PC-9 (cell line): ENCODE measurements at regions of chr20 and their contacts with region 1.

Region 1: GRCh38 chr20:34607066-34607465 is 48.5 kb downstream of the MAP1LC3A start:
- DNase-seq: no peak
- H3K4me3 ChIP-seq: no peak overlapping the region
- H3K27ac ChIP-seq: no peak overlapping the region
- H3K4me1 ChIP-seq: no peaks in the 10 kb centered on the region
- H3K27me3 ChIP-seq: no peaks in the 10 kb centered on the region
- CTCF ChIP-seq: no peak

Region 2: GRCh38 chr20:34586488-34587163 is 20.4 kb before region 1 on chr20:
- CTCF ChIA-PET with region 1: no interaction called
- POLR2A ChIA-PET with region 1: no interaction called
- intact Hi-C with region 1: loop called (anchors 2 kb)
- DNase-seq: no peak
- H3K4me3 ChIP-seq: no peak overlapping the region
- H3K27ac ChIP-seq: no peak overlapping the region
- H3K4me1 ChIP-seq: peaks cover 9% of the 10 kb centered on the region
- H3K27me3 ChIP-seq: no peaks in the 10 kb centered on the region
- CTCF ChIP-seq: no peak

Region 3: DNA sequence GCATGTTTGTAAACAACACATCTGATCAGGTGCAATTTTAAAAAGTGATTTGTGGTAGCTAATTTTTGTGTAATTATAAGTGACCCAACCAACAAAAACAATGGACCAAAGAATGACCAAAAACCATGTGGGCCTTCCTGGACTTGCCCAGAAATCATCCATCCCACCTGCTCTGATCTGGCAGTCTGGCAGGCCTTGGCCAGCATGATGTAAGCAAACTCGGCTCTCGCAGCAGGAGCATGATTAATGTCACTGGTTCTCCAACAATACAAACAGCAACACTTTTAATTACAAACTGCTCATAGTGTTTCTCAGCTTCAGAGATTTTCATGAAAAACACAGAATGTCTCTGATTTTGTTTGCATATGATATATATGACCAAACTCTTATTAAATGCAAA is 113.2 kb after region 1 on chr20:
- CTCF ChIA-PET with region 1: no interaction called
- POLR2A ChIA-PET with region 1: no interaction called
- intact Hi-C with region 1: no loop called
- DNase-seq: no peak
- H3K4me3 ChIP-seq: no peak overlapping the region
- H3K27ac ChIP-seq: no peak overlapping the region
- H3K4me1 ChIP-seq: no peaks in the 10 kb centered on the region
- H3K27me3 ChIP-seq: no peaks in the 10 kb centered on the region
- CTCF ChIP-seq: no peak